Motor neuron (in vitro differentiated cells): ENCODE measurements at regions of chr11 and their contacts with region 1.

Region 1: DNA sequence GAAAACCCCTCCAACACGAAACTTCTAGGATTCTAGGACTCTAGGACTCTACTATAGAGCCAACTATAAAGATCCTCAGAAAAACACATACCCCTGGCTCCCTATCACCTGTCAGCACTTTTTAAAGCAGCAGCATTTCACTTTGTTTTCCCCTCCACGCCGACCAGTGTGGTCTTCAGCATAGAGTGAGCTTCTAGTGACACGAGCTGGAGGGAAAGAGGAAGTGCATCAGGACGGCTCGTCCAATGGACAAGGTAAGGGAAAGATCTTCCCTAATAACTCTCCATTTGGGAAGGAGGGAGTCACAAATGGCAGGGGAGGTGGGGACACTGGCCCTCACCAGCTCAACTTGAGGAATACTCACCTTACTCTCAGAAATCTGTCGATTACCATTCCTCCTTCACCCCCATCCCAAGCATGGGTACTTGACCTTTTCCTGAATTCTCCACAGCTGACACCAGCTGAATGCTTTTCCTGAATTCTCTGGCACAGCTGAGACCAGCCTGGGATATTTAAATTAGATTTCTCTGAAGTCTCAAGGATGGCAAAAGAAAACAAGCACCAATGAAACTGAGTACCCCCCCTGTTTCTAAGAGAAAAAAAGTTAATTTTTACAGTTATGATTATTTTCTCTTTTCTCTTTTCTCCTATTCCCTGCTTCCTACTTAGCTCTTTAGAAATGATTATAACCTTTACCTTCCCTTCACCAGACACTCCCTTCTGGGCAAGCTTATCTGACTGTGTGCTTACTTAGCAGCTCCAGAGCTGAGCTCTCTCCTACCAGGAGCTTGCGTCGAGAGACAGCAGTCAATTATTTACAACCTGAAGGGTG is 33.3 kb upstream of the NNMT start:
- ATAC-seq: peak; percentile 34 to 91 (median 59)
- H3K4me3 ChIP-seq: no peak overlapping the region
- H3K27ac ChIP-seq: no peak overlapping the region
- H3K4me1 ChIP-seq: peaks cover 10 to 19% of the 10 kb centered on the region in 2 donors

Region 2: DNA sequence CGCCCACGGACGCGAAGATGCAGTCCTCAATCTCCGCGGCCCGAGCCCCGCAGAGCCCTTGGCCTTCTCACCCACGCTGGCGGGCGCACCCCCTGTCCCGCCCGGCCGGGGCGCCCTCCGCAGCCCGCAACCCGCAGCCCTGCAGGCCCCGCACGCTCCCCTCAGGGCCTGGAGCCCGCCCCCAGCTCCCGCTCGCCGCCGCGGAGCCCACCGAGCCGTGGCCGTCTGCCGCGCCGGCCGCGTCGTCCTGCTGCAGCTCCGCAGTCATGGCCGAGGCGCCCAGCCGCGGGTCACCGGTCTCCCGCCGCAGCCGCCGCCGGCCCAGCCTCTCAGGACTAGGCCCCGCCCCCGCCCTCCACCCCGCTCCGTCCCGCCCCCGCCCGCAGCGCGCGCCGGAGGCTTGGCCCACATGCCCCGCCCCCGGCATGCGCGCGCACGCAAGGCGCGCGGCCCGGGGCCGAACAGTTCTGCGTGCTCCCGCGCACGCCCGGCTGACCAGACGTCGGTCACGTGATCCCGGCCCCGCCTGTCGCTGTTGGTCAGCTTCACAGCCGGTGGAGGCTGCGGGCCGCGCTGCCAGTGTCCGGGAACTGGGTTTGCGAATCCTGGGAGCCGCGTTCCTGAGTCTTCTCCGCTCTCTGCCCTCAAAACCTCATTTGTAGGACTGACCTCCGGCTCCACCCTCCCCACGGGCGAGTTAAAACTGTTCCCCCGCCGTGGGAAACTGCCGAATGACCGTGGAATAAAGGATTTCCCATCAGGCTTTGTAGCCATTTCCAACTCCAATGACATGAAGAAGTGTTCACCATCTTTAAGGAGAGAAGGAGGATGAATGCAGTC is 387.4 kb before region 1 on chr11 and contains the start of gene USP28:
- in situ Hi-C with region 1: loop called in 3 of 9 experiments (anchors 25 kb)
- ATAC-seq: peak; percentile 89 to 95 (median 92)
- H3K4me3 ChIP-seq: peak within 1 kb of the TSS; percentile 68 to 93 (median 84)
- H3K27ac ChIP-seq: peak within 1 kb of the TSS; percentile 95 to 98
- H3K4me1 ChIP-seq: peaks cover 28 to 29% of the 10 kb centered on the region in 2 donors
- total RNA-seq, gene USP28: 10.4 to 41.6 (median 18.0) TPM

Region 3: DNA sequence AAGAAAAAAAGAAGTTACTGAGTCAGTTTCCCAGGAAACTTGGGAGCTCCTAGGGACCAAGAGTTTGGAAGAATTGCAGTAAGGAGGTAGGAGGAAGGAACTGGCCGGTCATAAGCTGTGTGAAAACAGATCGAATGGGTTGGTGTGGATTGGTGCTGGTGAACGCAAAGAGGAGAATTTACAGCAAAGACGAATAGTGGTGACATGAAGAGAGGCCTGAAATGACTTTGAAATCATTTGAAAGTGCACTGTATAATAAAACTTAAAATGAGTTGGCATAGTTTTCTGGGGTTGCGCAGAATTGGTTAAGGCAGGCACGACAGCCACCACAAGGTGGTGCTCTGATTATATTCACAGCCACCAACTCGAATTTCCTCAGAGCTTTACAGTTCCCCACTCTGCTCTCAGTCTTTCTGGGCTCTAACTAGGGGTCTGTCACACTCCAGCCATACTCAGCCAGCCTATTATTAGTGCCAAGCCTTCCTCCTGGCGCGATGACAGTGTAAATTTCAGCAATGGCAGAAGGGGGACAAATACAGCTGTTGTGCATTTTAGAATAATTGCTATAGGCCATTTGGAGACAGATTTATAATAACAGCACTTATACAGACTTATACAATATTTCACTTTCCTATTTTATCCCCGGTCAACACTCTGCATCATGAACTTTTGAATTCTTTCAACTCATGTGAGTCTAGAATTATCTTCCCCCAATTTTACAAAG is 366.6 kb before region 1 on chr11:
- in situ Hi-C with region 1: loop called in 7 of 9 experiments (anchors 10 to 25 kb)
- ATAC-seq: peak; percentile 71 to 90 (median 78)
- H3K4me3 ChIP-seq: no peak overlapping the region
- H3K27ac ChIP-seq: no peak overlapping the region
- H3K4me1 ChIP-seq: no peaks in the 10 kb centered on the region

Region 4: GRCh38 chr11:113994077-113994954 is 268.6 kb before region 1 on chr11:
- in situ Hi-C with region 1: loop called in 3 of 9 experiments (anchors 25 kb)
- ATAC-seq: peak in 6 of 8 experiments; percentile 29 to 42 (median 36)
- H3K4me3 ChIP-seq: no peak overlapping the region
- H3K27ac ChIP-seq: no peak overlapping the region
- H3K4me1 ChIP-seq: peaks cover 7 to 9% of the 10 kb centered on the region in 2 donors

Region 5: GRCh38 chr11:114036156-114036811 is 226.6 kb before region 1 on chr11:
- in situ Hi-C with region 1: loop called in 5 of 9 experiments (anchors 10 to 25 kb)
- ATAC-seq: peak; percentile 96 to 100 (median 98)
- H3K4me3 ChIP-seq: peak overlapping the region in 3 of 5 donors; percentile 8 to 22 (median 15)
- H3K27ac ChIP-seq: no peak overlapping the region
- H3K4me1 ChIP-seq: peaks cover 5 to 8% of the 10 kb centered on the region in 2 donors

Region 6: GRCh38 chr11:114091516-114092397 is 171.1 kb before region 1 on chr11:
- in situ Hi-C with region 1: no loop called
- ATAC-seq: peak in 5 of 8 experiments; percentile 78 to 89 (median 81)
- H3K4me3 ChIP-seq: peak overlapping the region in 1 of 5 donors; percentile 6
- H3K27ac ChIP-seq: peak overlapping the region; percentile 59 to 77
- H3K4me1 ChIP-seq: peaks cover 28 to 34% of the 10 kb centered on the region in 2 donors